CD8-positive, alpha-beta memory T cell (primary cell): ENCODE measurements at regions of chr12 and their contacts with region 1.

Region 1: DNA sequence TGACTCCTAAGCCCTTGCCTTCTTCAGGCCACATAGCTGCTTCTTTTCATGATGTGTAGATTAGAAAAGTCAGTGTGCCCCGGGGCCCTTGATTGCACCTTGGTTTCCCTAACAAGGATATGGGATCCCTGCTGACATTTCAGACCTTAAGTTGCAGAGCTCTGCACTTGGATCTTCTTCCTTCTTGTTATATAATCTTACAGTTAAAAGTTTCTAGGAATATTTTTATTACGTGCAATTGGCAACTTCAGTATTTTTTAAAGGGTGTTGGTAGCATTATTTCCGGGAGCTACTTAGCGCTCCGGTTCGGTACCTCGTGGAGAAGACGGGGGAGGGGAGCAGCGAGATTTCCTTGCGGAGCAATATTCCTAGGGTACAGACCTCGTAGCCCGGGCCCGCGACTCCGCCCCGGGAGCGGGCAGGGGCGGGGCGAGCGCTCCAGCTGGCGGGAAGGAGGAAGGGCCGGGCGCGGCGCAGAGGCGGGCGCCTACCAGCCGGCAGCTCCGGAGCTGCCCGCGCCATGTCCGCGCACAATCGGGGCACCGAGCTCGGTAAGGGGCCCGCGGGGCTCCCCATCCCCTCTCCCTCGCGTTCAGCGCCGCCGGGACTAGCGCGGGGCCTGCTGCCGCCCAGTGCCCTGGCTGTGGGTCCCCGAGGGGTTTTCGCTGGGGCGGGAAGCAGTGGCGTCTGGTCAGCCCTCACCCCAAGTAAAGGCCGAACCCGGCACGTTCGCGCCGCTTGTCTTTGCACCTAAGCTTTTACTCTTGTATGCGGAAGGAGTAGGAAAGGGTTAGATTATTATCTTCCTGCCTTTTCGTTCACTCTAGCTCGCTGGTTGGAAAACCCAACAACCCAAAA is at the start of gene DERA:
- DNase-seq: peak; percentile 40 to 68 (median 51)
- H3K4me3 ChIP-seq: peak within 1 kb of the TSS; percentile 51
- H3K4me3 Mint-ChIP-seq: peak within 1 kb of the TSS; percentile 87 to 93 (median 89)
- H3K27ac ChIP-seq: peak within 1 kb of the TSS; percentile 55
- H3K27ac Mint-ChIP-seq: peak within 1 kb of the TSS; percentile 37 to 96 (median 84)
- H3K4me1 ChIP-seq: peaks cover 4% of the 10 kb centered on the region
- H3K4me1 Mint-ChIP-seq: peaks cover 11 to 24% (median 22%) of the 10 kb centered on the region in 3 donors
- H3K27me3 ChIP-seq: no peaks in the 10 kb centered on the region
- H3K27me3 Mint-ChIP-seq: no peaks in the 10 kb centered on the region
- total RNA-seq, gene DERA: 25.2 to 26.6 TPM

Region 2: GRCh38 chr12:15823360-15824128 is 87.5 kb before region 1 on chr12:
- CTCF ChIA-PET with region 1: no interaction called
- POLR2A ChIA-PET with region 1: no interaction called
- DNase-seq: no peak
- H3K4me3 ChIP-seq: no peak overlapping the region
- H3K4me3 Mint-ChIP-seq: no peak overlapping the region
- H3K27ac ChIP-seq: no peak overlapping the region
- H3K27ac Mint-ChIP-seq: no peak overlapping the region
- H3K4me1 ChIP-seq: no peaks in the 10 kb centered on the region
- H3K4me1 Mint-ChIP-seq: no peaks in the 10 kb centered on the region
- H3K27me3 ChIP-seq: no peaks in the 10 kb centered on the region
- H3K27me3 Mint-ChIP-seq: peaks cover 8 to 11% of the 10 kb centered on the region in 2 donors

Region 3: GRCh38 chr12:15882118-15882971 is 28.7 kb before region 1 on chr12 and contains the start of gene STRAP:
- CTCF ChIA-PET with region 1: interaction called, 3 read pairs
- POLR2A ChIA-PET with region 1: interaction called, 12 read pairs
- DNase-seq: peak; percentile 91 to 98 (median 96)
- H3K4me3 ChIP-seq: peak within 1 kb of the TSS; percentile 97
- H3K4me3 Mint-ChIP-seq: peak within 1 kb of the TSS; percentile 91 to 100 (median 99)
- H3K27ac ChIP-seq: peak within 1 kb of the TSS; percentile 99
- H3K27ac Mint-ChIP-seq: peak within 1 kb of the TSS; percentile 98 to 100 (median 100)
- H3K4me1 ChIP-seq: peaks cover 38% of the 10 kb centered on the region
- H3K4me1 Mint-ChIP-seq: peaks cover 58 to 65% (median 58%) of the 10 kb centered on the region in 3 donors
- H3K27me3 ChIP-seq: no peaks in the 10 kb centered on the region
- H3K27me3 Mint-ChIP-seq: peaks cover 0 to 1% of the 10 kb centered on the region in 2 donors
- total RNA-seq, gene STRAP: 179 to 185 TPM

Region 4: GRCh38 chr12:15899282-15899870 is 11.7 kb before region 1 on chr12:
- CTCF ChIA-PET with region 1: interaction called, 11 read pairs
- POLR2A ChIA-PET with region 1: no interaction called
- DNase-seq: peak in 2 of 5 donors; percentile 16 to 27
- H3K4me3 ChIP-seq: no peak overlapping the region
- H3K4me3 Mint-ChIP-seq: no peak overlapping the region
- H3K27ac ChIP-seq: no peak overlapping the region
- H3K27ac Mint-ChIP-seq: peak overlapping the region in 6 of 8 donors; percentile 12 to 91 (median 36)
- H3K4me1 ChIP-seq: no peaks in the 10 kb centered on the region
- H3K4me1 Mint-ChIP-seq: peaks cover 2 to 9% (median 5%) of the 10 kb centered on the region in 3 donors
- H3K27me3 ChIP-seq: no peaks in the 10 kb centered on the region
- H3K27me3 Mint-ChIP-seq: no peaks in the 10 kb centered on the region